Naive thymus-derived CD8-positive, alpha-beta T cell (primary cell): ENCODE measurements at regions of chr12 and their contacts with region 1.

Region 1: DNA sequence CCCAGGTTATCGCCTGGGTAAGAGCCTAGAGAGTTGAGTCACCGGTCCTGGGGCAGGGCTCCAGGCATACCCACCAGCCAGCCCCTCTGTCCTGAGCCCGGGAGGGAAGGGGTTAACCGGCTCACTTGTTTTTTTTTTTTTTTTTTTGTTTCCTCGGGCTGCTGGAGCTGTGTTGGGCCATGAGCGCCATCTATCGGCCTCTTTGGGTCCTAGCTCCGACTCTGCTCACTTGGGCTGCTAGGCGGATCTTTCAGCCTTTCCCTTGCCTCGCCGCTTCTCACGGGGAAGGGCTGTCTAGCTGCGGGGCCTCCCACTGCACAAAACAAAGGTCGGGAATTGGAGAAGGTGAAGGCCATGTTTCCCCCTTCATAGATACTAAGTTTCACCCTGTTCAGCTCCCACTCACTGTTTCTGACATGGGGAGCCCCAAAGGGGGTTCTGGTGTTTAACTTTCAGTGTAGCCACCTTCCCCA is 2.8 kb upstream of the SMUG1 start:
- DNase-seq: peak; percentile 66 to 89 (median 77)
- ATAC-seq: peak; percentile 63 to 64
- H3K4me3 Mint-ChIP-seq: peak overlapping the region in 2 of 10 donors; percentile 15 to 26
- H3K27ac Mint-ChIP-seq: peak overlapping the region in 1 of 10 donors; percentile 43
- H3K4me1 Mint-ChIP-seq: peaks cover 7 to 40% (median 23%) of the 10 kb centered on the region in 4 donors
- H3K27me3 Mint-ChIP-seq: peaks cover 31 to 60% (median 42%) of the 10 kb centered on the region in 5 donors

Region 2: GRCh38 chr12:54032627-54033100 is 158.9 kb before region 1 on chr12 and contains the start of gene HOXC5:
- POLR2A ChIA-PET with region 1: interaction called, 18 read pairs
- DNase-seq: peak; percentile 47 to 77 (median 66)
- ATAC-seq: peak in 1 of 2 donors; percentile 34
- H3K4me3 Mint-ChIP-seq: peak within 1 kb of the TSS; percentile 53 to 83 (median 72)
- H3K27ac Mint-ChIP-seq: peak within 1 kb of the TSS in 4 of 10 donors; percentile 15 to 81 (median 40)
- H3K4me1 Mint-ChIP-seq: peaks cover 13 to 38% (median 29%) of the 10 kb centered on the region in 4 donors
- H3K27me3 Mint-ChIP-seq: peaks cover 43 to 96% (median 66%) of the 10 kb centered on the region in 5 donors
- polyA plus RNA-seq, gene HOXC5: not detected